ENCODE measurements at regions of chr3 and their contacts with region 1.

Region 1: DNA sequence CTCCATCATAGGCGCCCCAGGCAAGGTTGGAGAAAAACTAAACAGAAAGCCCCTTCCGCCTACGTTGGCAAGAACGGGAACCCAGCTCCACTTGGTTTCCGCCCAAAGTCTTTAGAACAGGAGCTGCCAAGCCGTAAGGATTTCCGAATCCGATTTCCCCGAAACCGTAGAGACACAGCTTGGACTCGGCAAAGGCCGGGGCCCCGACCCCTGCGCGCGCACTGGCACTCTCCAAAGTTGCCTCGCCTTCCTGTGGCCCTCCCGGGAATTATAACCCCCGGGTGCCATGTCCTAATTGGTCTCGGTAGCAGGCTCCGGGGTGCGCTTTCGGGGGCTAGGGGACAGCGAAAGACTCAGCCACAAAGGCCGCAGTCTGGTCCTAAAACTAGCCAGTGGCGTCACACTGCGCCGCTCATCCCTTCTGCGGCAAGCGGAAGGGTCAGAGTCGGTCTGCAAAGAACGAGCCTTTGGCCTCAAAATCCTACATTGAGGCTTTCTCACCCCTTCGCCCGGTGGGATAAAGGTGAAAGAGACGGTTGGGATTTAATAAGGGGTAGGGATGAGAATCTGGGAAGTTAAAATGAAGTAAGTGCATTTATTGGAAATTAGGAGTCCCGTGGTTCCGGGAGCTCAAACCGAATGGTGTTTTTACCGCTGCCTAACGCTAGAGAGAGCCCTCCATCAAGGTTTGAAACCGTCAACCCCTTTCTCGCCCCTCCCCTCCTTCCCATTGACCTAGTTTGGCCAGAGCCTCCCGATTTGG is 6.8 kb downstream of the BCL6 start:
- DNase-seq: peak; percentile 82
- ATAC-seq: peak; percentile 50
- H3K4me3 Mint-ChIP-seq: peak overlapping the region; percentile 93
- H3K27ac Mint-ChIP-seq: peak overlapping the region; percentile 98
- H3K4me1 Mint-ChIP-seq: peaks cover 47% of the 10 kb centered on the region
- H3K27me3 Mint-ChIP-seq: no peaks in the 10 kb centered on the region
- CTCF ChIP-seq: peak; percentile 79

Region 2: GRCh38 chr3:187802928-187803259 is 64.4 kb after region 1 on chr3:
- CTCF ChIA-PET with region 1: interaction called, 14 read pairs
- POLR2A ChIA-PET with region 1: interaction called, 134 read pairs
- intact Hi-C with region 1: no loop called
- DNase-seq: peak; percentile 86
- ATAC-seq: peak; percentile 48
- H3K4me3 Mint-ChIP-seq: peak overlapping the region; percentile 52
- H3K27ac Mint-ChIP-seq: peak overlapping the region; percentile 92
- H3K4me1 Mint-ChIP-seq: peaks cover 93% of the 10 kb centered on the region
- H3K27me3 Mint-ChIP-seq: no peaks in the 10 kb centered on the region
- CTCF ChIP-seq: no peak

Region 3: DNA sequence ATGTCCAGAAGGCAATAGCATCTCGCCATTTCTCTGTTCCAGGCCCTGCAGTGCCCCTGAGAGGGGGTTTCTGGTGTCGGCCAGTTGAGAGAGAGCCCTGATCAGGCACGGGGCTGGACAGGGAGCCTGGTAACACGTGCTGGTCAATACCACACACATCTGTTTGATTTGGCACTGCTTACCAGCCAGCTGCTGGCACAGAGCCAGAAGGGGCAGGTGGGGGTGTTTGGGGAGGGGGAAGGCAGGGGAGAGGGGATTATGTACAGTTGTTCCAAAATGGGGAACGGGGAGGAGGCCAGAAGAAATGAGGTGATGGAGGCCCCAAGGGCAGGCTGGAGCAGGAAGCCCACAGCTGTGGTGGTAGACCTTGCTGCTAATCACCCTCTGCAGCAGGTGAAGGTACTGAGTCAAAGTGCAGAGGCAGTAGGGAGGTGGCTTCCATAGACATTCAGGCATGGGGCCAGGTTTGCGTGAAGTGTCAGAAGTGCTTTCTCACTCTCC is 261.9 kb after region 1 on chr3:
- CTCF ChIA-PET with region 1: interaction called, 18 read pairs
- POLR2A ChIA-PET with region 1: interaction called, 3 read pairs
- intact Hi-C with region 1: no loop called
- DNase-seq: peak; percentile 42
- ATAC-seq: peak; percentile 25
- H3K4me3 Mint-ChIP-seq: peak overlapping the region; percentile 68
- H3K27ac Mint-ChIP-seq: peak overlapping the region; percentile 91
- H3K4me1 Mint-ChIP-seq: peaks cover 59% of the 10 kb centered on the region
- H3K27me3 Mint-ChIP-seq: no peaks in the 10 kb centered on the region
- CTCF ChIP-seq: no peak

Region 4: DNA sequence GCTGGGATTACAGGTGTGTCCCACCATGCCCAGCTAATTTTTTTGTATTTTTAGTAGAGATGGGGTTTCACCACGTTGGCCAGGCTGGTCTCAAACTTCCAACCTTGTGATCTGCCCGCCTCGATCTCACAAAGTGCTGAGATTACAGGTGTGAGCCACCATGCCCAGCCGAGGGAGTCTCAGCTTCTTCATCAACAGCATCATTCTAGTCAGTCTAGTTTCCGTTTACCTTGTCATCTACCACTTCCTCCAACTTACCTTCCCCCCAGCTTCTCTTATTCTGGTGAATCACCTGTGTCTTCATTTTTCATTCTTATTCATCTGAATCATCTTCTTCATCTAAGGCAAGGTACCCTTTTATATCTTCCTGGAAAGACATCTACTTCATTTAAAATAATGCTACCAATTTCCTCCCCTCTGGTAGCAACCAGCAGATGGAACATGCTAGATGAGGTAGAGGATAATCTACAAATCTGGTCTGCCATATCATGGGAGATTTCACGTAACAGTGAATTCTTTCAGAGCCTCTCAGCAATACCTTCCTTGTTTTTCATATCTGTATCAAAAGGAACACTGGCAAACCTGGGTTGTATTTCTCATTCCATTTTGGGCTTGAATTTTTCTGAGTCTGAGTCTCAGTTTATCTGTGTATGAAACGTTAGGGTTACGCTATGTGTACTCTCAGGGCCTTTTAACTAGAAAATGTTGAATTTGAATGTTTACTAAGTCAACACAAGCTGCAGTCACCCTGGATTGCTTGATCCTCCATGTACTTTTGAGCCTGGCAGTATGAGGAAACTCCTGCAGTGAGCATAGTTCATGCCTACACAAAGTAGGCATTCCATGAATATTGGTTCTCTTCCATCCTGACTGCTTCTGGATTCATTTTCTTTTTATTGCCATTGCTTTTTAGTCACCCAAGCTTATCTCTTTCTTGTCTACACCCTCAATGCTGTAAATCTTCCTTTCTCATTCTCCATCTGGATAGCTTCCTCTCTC is 432.2 kb after region 1 on chr3:
- CTCF ChIA-PET with region 1: interaction called, 17 read pairs
- POLR2A ChIA-PET with region 1: interaction called, 6 read pairs
- intact Hi-C with region 1: no loop called
- DNase-seq: peak; percentile 77
- ATAC-seq: peak; percentile 93
- H3K4me3 Mint-ChIP-seq: peak overlapping the region; percentile 2
- H3K27ac Mint-ChIP-seq: peak overlapping the region; percentile 81
- H3K4me1 Mint-ChIP-seq: peaks cover 43% of the 10 kb centered on the region
- H3K27me3 Mint-ChIP-seq: no peaks in the 10 kb centered on the region
- CTCF ChIP-seq: no peak

Region 5: GRCh38 chr3:188339410-188340295 is 601.1 kb after region 1 on chr3:
- CTCF ChIA-PET with region 1: interaction called, 14 read pairs
- POLR2A ChIA-PET with region 1: interaction called, 7 read pairs
- intact Hi-C with region 1: loop called (anchors 10 kb)
- DNase-seq: peak; percentile 74
- ATAC-seq: peak; percentile 88
- H3K4me3 Mint-ChIP-seq: peak overlapping the region; percentile 68
- H3K27ac Mint-ChIP-seq: peak overlapping the region; percentile 95
- H3K4me1 Mint-ChIP-seq: peaks cover 42% of the 10 kb centered on the region
- H3K27me3 Mint-ChIP-seq: no peaks in the 10 kb centered on the region
- CTCF ChIP-seq: no peak

Region 6: GRCh38 chr3:188749010-188749617 is 1010.6 kb after region 1 on chr3:
- CTCF ChIA-PET with region 1: interaction called, 35 read pairs
- POLR2A ChIA-PET with region 1: no interaction called
- intact Hi-C with region 1: loop called (anchors 5 kb)
- DNase-seq: peak; percentile 60
- ATAC-seq: no peak
- H3K4me3 Mint-ChIP-seq: no peak overlapping the region
- H3K27ac Mint-ChIP-seq: no peak overlapping the region
- H3K4me1 Mint-ChIP-seq: peaks cover 27% of the 10 kb centered on the region
- H3K27me3 Mint-ChIP-seq: no peaks in the 10 kb centered on the region
- CTCF ChIP-seq: peak; percentile 69

Region 7: GRCh38 chr3:189132231-189132707 is 1393.8 kb after region 1 on chr3:
- CTCF ChIA-PET with region 1: interaction called, 16 read pairs
- POLR2A ChIA-PET with region 1: no interaction called
- intact Hi-C with region 1: no loop called
- DNase-seq: peak; percentile 93
- ATAC-seq: peak; percentile 94
- H3K4me3 Mint-ChIP-seq: peak overlapping the region; percentile 44
- H3K27ac Mint-ChIP-seq: peak overlapping the region; percentile 91
- H3K4me1 Mint-ChIP-seq: peaks cover 22% of the 10 kb centered on the region
- H3K27me3 Mint-ChIP-seq: no peaks in the 10 kb centered on the region
- CTCF ChIP-seq: no peak

Measured in activated CD8-positive, alpha-beta T cell treated with anti-CD3 and anti-CD28 coated beads for 36 hours (primary cell).